HEK293 (cell line): ENCODE measurements at regions of chr14 and their contacts with region 1.

Region 1: GRCh38 chr14:102235275-102235897 is 69.6 kb downstream of the MOK start:
- H3K4me3 ChIP-seq: no peak overlapping the region
- H3K27ac ChIP-seq: no peak overlapping the region
- H3K4me1 ChIP-seq: no peaks in the 10 kb centered on the region
- CTCF ChIP-seq: peak; percentile 47; the same call in 1 of the 2 replicates

Region 2: DNA sequence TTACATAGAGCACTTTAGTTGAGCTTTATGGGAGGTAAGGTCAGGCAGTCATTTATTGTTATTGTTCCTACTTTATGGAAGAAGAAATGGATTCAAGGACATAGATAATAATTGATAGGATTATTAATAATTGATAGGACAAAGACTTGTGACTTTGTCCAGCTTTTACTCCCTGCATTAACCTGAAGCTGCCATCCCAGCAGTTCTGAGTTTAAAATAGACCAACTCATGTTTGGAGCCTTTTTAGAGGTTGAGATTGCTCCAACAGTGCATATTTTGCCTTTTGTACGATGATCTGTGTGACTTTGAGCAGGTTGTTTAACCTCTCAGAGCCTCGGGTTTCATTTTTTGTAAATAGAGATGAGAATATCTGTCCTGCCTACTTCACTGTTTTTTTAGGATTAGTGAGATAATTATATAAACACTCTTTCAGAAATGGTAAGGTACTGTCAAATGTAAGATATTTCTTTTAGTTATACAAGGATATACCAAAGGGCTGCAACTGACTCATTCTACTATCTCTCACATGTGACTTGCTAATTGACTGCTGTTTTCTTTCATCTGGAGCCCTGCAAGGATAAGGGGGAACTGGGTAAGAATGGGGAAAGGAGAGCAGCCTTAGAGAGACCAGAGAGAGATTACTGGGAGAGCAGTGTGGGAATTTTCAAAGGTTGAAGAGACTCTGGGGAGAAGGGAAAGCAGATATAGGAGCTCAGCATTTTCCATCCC is 80.4 kb before region 1 on chr14:
- CTCF ChIA-PET with region 1: no interaction called
- POLR2A ChIA-PET with region 1: no interaction called
- H3K4me3 ChIP-seq: no peak overlapping the region
- H3K27ac ChIP-seq: 0 out of 2 replicates have a peak overlapping the region, but pooled peaks have one; percentile 22
- H3K4me1 ChIP-seq: peaks cover 17% of the 10 kb centered on the region
- CTCF ChIP-seq: no peak

Region 3: GRCh38 chr14:102221026-102221425 is 14.4 kb before region 1 on chr14:
- CTCF ChIA-PET with region 1: no interaction called
- POLR2A ChIA-PET with region 1: no interaction called
- H3K4me3 ChIP-seq: no peak overlapping the region
- H3K27ac ChIP-seq: no peak overlapping the region
- H3K4me1 ChIP-seq: no peaks in the 10 kb centered on the region
- CTCF ChIP-seq: no peak

Region 4: DNA sequence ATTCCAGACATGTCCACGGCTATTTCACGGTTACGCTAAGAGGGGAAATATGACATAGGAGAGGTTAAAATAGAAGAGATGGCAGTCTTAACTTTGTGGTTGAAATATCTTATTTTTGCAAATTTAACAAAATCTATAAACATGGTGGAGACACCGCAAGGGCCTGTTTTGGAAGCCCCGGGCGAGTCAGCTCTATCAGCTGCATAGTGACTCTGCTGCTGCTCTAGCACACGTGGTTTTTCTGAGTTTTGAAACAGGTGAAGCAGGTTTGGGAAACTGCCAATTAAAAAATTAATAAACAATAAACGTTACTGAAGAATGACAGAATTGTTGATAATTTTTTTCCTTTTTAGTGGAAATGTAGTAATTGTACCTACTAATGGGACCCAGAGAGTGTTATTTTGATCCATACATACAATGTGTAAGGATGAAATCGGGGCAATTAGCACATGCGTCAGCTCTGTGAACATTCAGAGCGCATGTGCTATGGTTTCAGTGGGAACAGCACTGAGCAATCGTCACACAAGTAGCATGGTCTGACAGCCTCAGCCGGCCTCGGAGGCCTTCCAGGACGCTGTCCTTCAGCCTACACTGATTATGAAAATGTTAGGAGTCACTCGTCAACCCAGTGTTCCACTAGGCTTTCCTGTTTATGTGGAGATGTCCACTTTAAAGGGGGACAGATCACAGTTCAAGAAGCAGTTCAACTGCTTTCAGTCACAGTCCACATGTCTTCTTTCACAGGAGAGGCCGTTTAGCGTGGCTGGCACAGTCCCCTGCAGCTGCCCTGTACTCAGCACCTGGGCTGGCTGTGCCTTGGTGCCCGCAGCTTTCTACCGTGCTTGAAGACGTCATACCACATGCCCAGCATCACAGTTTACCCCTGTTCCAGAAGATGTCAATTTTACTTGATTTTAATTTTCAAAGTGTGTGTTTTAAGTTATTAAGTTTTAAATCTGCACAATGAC is 17.7 kb after region 1 on chr14:
- CTCF ChIA-PET with region 1: interaction called, 10 read pairs
- POLR2A ChIA-PET with region 1: no interaction called
- H3K4me3 ChIP-seq: no peak overlapping the region
- H3K27ac ChIP-seq: no peak overlapping the region
- H3K4me1 ChIP-seq: no peaks in the 10 kb centered on the region; the same call in 1 of the 2 replicates
- CTCF ChIP-seq: no peak